ENCODE measurements at regions of chr12 and their contacts with region 1.

Region 1: DNA sequence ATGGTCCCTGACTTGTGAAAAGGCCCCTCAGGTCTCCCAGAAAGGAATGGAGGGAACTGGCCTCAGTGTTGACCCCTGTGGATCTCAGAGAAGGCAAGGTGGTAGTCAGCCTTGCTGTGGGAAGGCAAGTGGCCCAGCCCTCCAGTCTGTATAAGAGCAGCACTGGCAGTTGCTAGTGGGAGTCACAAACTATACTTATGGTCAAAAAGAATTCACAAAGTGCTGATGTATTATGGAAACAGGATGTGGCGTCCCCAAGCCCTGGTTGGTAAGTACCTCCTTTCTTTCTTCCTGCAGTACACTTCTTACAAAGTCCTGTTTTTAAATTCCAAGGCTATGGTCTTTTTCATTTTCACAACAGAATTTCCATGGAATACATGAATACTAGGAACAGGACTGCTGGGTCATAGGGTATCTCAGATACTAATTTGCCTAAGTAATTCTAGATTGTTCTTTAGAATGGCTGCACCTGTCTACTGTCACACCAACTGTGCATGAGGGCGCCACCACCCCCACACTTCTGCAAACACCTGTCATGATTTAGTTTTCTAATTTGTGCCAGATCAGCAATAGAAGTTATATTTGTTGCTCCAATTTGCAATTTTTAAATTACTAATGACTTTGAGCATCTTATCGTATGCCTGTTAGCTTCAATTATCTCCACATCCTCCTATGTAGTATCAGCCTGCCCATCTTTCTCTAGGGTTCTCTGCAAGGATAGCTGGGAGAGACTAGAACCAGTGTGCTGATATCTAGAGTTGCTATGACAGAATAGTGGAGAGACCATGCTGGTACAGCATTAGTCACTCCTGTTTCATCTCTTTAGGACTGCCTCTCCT is 40.7 kb upstream of the TMEM263 start:
- DNase-seq: peak; percentile 58
- H3K4me3 Mint-ChIP-seq: no peak overlapping the region
- H3K27ac Mint-ChIP-seq: peak overlapping the region; percentile 66
- H3K4me1 Mint-ChIP-seq: peaks cover 25% of the 10 kb centered on the region
- H3K27me3 Mint-ChIP-seq: peaks cover 3% of the 10 kb centered on the region

Region 2: DNA sequence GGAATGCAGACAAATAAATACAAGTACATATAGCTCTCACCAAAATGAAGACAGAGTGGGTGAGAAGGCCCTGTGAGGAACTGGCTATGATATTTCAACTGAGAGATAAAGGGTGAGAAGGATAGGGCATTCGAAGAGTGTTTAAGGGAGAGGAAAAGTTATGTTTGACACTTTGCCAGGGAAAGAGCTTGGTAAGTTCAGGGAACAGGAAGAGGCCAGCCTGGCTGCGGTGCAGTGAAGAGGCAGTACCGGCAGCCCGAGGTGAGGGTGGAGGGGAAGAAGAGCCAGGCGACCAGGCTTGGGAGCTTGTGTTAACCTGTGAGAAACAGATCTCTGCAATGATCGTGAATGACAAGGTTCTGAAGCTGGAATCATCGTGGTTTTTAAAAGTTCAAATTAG is 417.0 kb before region 1 on chr12:
- CTCF ChIA-PET with region 1: no interaction called
- POLR2A ChIA-PET with region 1: no interaction called
- intact Hi-C with region 1: no loop called
- DNase-seq: no peak
- H3K4me3 Mint-ChIP-seq: no peak overlapping the region
- H3K27ac Mint-ChIP-seq: no peak overlapping the region
- H3K4me1 Mint-ChIP-seq: no peaks in the 10 kb centered on the region
- H3K27me3 Mint-ChIP-seq: no peaks in the 10 kb centered on the region

Region 3: DNA sequence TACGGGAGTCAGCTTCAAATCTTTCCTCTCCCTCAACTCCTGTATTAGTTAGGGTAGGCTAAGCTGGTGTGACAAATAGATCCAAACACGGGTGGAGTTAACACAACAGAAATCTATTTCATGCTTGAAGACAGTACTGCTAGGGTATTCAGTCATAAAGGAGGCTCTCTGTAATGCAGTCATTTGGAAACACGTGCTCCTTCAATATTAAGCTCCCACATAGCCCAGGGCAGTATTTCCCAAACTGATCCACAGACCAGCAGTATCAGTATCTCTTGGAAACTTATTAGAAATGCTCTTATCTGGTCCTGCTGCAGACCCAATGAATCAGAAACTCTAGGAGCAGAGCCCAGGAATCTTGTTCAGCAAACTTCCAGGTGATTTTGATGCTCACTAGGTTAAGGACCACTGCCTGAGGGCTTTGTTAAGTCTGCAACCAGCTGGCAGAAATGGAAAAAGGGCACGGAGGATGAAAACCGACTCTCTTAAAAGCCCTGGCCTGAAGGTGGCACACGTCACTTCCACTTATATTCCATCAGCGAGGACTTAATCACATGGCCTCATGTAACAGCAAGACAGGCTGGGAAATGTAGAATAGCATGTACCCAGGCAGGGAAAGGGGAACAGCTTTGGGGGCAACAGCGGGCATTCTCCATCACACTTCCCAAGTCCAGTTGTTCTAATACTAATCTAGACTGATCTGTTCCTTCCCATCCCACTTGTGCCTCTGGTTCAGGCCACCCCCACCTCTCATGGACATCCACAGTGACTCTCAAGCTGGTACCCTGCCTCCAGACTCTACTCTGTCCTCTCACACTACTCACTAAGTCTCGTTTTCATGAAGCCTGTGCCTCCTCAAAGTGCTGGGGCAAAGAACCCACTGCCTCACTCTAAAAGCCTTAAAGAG is 178.7 kb before region 1 on chr12:
- CTCF ChIA-PET with region 1: interaction called, 4 read pairs
- POLR2A ChIA-PET with region 1: no interaction called
- intact Hi-C with region 1: loop called (anchors 1 kb)
- DNase-seq: peak; percentile 29
- H3K4me3 Mint-ChIP-seq: no peak overlapping the region
- H3K27ac Mint-ChIP-seq: no peak overlapping the region
- H3K4me1 Mint-ChIP-seq: peaks cover 7% of the 10 kb centered on the region
- H3K27me3 Mint-ChIP-seq: no peaks in the 10 kb centered on the region

Region 4: DNA sequence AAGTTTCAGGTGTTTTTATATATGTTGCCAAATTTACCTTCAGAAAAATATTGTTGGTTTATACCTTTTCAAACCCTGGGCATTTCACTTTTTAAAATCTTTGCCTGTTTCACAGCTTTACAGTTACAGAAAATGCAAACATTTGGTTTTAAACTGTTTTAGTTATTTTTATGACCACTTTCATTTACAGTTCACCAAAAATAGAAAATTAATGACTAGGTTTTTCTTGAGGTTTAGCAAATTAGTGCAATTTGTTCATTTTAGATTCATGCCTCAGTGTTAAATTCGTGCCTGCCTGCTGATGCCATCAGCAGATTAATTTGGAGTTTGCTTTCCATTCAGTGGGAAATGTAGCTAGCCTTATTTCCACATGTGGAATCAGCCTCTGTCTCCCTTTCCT is 95.0 kb before region 1 on chr12:
- CTCF ChIA-PET with region 1: no interaction called
- POLR2A ChIA-PET with region 1: no interaction called
- intact Hi-C with region 1: loop called (anchors 1 kb)
- DNase-seq: no peak
- H3K4me3 Mint-ChIP-seq: no peak overlapping the region
- H3K27ac Mint-ChIP-seq: no peak overlapping the region
- H3K4me1 Mint-ChIP-seq: peaks cover 18% of the 10 kb centered on the region
- H3K27me3 Mint-ChIP-seq: no peaks in the 10 kb centered on the region

Region 5: DNA sequence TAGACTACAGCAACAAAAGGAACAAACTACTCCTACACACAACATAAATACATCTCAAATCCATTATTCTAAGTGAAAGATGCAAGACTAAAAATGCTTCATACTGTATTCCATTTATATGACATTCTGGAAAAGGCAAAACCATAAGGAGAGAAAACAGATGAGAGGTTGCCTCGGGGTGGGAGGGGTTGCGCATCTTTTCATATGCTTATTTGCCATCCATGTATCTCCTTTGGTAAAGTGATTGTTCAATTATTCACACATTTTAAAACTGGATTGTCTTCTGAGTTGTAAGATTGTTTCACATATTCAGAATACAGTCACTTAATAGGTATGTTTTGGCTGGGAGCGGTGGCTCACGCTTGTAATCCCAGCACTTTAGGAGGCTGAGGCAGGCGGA is 35.6 kb after region 1 on chr12:
- CTCF ChIA-PET with region 1: no interaction called
- POLR2A ChIA-PET with region 1: no interaction called
- intact Hi-C with region 1: no loop called
- DNase-seq: no peak
- H3K4me3 Mint-ChIP-seq: no peak overlapping the region
- H3K27ac Mint-ChIP-seq: no peak overlapping the region
- H3K4me1 Mint-ChIP-seq: peaks cover 3% of the 10 kb centered on the region
- H3K27me3 Mint-ChIP-seq: no peaks in the 10 kb centered on the region

Region 6: DNA sequence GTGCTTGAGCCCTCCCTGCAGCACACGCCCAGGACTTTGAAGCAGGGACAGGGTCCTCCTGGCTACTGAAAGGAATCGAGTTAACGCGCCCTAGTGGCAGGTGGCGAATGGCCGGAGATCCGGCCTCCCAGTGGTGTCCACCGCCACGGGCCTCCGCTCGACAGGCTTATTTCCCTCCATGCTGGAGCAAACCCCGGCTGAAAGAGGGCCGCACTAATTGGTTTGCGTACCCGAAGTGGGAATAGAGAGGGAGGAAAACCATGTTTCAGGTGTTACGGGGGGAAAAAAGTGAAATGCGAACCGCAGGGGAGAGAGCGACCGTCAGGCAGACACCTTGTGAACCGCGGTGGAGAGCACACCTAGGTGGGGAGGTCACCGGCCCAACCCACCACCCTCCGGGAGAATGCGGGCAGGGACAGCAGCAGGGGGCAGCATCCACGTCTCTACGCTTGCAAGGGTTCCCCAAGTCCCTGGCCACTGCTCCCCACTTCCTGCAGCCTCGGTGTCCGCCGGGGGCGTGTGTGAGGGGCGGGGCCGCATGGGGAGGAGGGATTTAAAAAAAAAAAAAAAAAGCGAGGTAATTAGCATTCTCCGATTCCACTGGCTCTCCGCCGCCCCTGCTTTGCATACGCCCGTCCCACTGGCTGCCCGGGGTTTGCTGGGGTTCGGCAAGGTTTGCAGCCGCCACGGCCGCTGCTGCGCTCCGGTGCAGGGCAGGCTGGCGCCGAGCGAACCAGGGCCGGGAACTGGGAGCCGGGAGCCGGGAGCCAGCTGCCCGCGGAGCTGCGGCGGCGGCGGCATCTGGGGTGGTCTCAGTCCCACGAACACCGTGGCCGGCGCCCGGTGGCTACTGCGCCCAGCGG is 403.0 kb after region 1 on chr12:
- CTCF ChIA-PET with region 1: no interaction called
- POLR2A ChIA-PET with region 1: no interaction called
- intact Hi-C with region 1: no loop called
- DNase-seq: peak; percentile 93
- H3K4me3 Mint-ChIP-seq: peak overlapping the region; percentile 82
- H3K27ac Mint-ChIP-seq: no peak overlapping the region
- H3K4me1 Mint-ChIP-seq: peaks cover 26% of the 10 kb centered on the region
- H3K27me3 Mint-ChIP-seq: peaks cover 8% of the 10 kb centered on the region